PC-3 (cell line): ENCODE measurements at regions of chr9 and their contacts with region 1.

Region 1: DNA sequence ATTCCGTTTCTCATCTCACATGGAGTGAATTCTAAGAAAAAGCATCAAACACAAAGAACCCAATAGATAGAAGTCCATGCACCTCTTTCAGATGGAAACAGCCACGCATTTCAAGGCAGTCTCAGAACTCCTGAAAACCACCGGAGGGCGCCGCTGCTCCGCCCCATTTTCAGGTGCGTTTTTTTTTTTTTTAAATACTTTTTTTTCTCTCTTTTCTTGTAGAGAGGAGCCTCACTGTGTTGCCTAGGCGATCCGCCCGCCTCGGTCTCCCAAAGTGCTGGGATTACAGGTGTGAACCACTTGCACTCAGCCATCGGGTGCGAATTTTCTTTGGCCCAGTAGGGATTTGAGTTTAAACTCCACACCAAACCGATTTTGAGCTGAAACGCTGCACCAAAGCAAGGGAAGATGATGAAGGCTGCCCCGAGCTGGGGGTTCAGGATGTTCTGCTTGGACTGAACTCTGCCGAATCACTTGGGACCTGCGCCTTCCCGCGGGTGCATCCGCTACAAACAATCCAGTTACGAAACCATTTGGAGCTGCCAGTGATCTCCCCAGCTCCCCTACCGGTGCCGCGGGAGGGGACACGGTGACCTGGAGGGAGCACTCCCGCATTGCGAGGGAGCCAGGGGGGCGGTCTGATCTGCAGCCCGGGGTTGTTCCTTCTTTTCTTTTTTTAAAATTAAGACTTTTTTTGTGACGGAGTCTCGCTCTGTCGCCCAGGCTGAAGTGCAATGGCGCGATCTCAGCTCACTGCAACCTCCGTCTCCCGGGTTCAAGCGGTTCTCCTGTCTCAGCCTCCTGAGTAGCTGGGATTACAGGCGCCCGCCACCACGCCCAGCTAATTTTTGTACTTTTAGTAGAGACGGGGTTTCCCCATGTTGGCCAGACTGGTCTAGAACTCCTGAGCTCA is 1.4 kb downstream of the PTGR1 start:
- DNase-seq: peak; percentile 61
- ATAC-seq: peak; percentile 31
- H3K4me3 ChIP-seq: peak overlapping the region; percentile 80
- H3K27ac ChIP-seq: peak overlapping the region; percentile 43; the same call in 1 of the 2 replicates
- H3K4me1 ChIP-seq: peaks cover 16% of the 10 kb centered on the region
- H3K27me3 ChIP-seq: no peaks in the 10 kb centered on the region
- CTCF ChIP-seq: peak; percentile 73

Region 2: GRCh38 chr9:111621895-111622480 is 23.9 kb after region 1 on chr9:
- CTCF ChIA-PET with region 1: interaction called, 18 read pairs
- POLR2A ChIA-PET with region 1: no interaction called
- intact Hi-C with region 1: loop called (anchors 1 kb)
- DNase-seq: peak; percentile 52
- ATAC-seq: peak; percentile 88
- H3K4me3 ChIP-seq: no peak overlapping the region
- H3K27ac ChIP-seq: no peak overlapping the region
- H3K4me1 ChIP-seq: no peaks in the 10 kb centered on the region; the same call in 1 of the 2 replicates
- H3K27me3 ChIP-seq: no peaks in the 10 kb centered on the region
- CTCF ChIP-seq: peak; percentile 72

Region 3: GRCh38 chr9:111661150-111661801 is 63.2 kb after region 1 on chr9 and contains the start of gene GNG10:
- CTCF ChIA-PET with region 1: no interaction called
- POLR2A ChIA-PET with region 1: no interaction called
- intact Hi-C with region 1: no loop called
- DNase-seq: peak; percentile 53
- ATAC-seq: peak; percentile 90
- H3K4me3 ChIP-seq: peak within 1 kb of the TSS; percentile 83
- H3K27ac ChIP-seq: no peak within 1 kb of the TSS
- H3K4me1 ChIP-seq: peaks cover 4% of the 10 kb centered on the region; the same call in 1 of the 2 replicates
- H3K27me3 ChIP-seq: no peaks in the 10 kb centered on the region
- CTCF ChIP-seq: no peak
- total RNA-seq, gene GNG10: 27.1 and 50.7 TPM in 2 replicates

Region 4: GRCh38 chr9:111691672-111692329 is 93.7 kb after region 1 on chr9:
- CTCF ChIA-PET with region 1: no interaction called
- POLR2A ChIA-PET with region 1: no interaction called
- intact Hi-C with region 1: loop called (anchors 1 kb)
- DNase-seq: peak; percentile 58
- ATAC-seq: peak; percentile 63
- H3K4me3 ChIP-seq: no peak overlapping the region
- H3K27ac ChIP-seq: no peak overlapping the region
- H3K4me1 ChIP-seq: no peaks in the 10 kb centered on the region
- H3K27me3 ChIP-seq: no peaks in the 10 kb centered on the region
- CTCF ChIP-seq: peak; percentile 63

Region 5: GRCh38 chr9:112034216-112034611 is 436.1 kb after region 1 on chr9:
- CTCF ChIA-PET with region 1: interaction called, 10 read pairs
- POLR2A ChIA-PET with region 1: no interaction called
- intact Hi-C with region 1: no loop called
- DNase-seq: no peak
- ATAC-seq: no peak
- H3K4me3 ChIP-seq: no peak overlapping the region
- H3K27ac ChIP-seq: no peak overlapping the region
- H3K4me1 ChIP-seq: peaks cover 37% of the 10 kb centered on the region
- H3K27me3 ChIP-seq: no peaks in the 10 kb centered on the region
- CTCF ChIP-seq: no peak